Naive thymus-derived CD4-positive, alpha-beta T cell (primary cell): ENCODE measurements at regions of chr4 and their contacts with region 1.

Region 1: DNA sequence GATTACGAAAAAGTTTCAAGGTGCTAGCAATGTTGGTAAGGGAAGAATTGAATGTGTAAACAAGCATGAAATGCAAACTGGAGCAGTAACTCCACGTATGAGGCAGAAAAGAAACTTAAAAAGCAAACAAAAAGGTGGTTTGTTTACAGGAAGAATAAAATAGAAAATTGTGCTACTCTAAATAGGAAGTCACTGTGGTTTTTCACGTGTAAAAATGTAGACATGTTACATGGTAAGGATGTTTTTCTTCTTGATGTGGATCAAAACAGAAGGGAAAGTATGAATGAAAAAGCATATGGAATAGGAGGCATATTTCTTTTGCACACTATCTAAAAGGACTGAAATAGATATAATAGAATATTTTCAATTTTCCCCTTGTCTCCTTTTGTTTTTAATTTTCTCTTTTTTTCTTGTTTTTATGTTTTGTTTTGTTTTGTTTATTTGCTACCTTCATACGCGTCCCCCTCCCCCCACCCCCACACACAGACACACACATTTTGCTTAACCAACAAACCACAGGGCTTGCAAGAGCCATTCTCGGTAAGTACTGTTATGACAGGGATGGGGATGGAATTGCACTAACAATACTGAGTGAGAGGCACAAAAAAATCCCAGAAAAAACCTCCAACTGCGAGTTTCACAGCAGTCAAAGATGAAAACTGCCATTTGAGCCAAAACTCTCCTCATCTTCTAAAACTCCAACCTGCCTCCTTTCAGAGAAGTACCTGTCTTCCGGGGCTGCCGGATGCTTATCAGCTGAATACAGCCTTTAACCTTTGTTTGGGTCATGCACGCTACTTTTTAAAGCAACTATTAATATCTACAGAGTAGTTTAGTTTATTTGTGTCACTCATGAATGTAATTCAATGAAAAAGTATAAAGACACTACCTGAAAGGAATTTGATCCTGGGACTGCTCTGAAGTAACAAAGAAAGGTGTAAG is 135.8 kb downstream of the IL15 start:
- DNase-seq: no peak
- ATAC-seq: no peak
- H3K4me3 ChIP-seq: no peak overlapping the region
- H3K4me3 Mint-ChIP-seq: peak overlapping the region in 4 of 10 donors; percentile 22 to 37 (median 30)
- H3K27ac ChIP-seq: no peak overlapping the region
- H3K27ac Mint-ChIP-seq: peak overlapping the region in 1 of 9 donors; percentile 29
- H3K4me1 ChIP-seq: no peaks in the 10 kb centered on the region
- H3K4me1 Mint-ChIP-seq: peaks cover 0 to 19% (median 11%) of the 10 kb centered on the region in 7 donors
- H3K27me3 ChIP-seq: no peaks in the 10 kb centered on the region
- H3K27me3 Mint-ChIP-seq: peaks cover 11 to 34% (median 18%) of the 10 kb centered on the region in 5 donors

Region 2: DNA sequence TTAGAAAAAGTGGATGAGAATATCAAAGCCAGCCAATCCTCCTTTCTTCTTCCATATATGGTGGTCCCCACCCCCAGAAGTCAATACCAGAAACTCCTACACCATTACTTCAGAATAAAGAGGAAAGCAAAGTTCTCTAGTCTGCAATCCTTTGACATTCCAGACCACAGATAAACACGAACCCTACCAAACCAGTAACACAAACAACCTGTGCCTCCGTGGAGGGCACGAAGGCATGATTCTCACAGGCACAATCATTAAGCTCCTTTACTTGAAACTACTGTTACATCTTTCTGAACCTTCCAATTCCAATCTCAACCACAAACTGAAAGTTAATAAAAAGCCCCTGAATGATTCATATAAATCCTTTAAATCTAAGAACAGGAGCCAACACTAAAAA is 1634.5 kb before region 1 on chr4:
- CTCF ChIA-PET with region 1: no interaction called
- POLR2A ChIA-PET with region 1: no interaction called
- intact Hi-C with region 1: no loop called
- DNase-seq: no peak
- ATAC-seq: no peak
- H3K4me3 ChIP-seq: no peak overlapping the region
- H3K4me3 Mint-ChIP-seq: peak overlapping the region in 1 of 10 donors; percentile 32
- H3K27ac ChIP-seq: no peak overlapping the region
- H3K27ac Mint-ChIP-seq: peak overlapping the region in 2 of 9 donors; percentile 28 to 32
- H3K4me1 ChIP-seq: no peaks in the 10 kb centered on the region
- H3K4me1 Mint-ChIP-seq: peaks cover 9 to 22% (median 13%) of the 10 kb centered on the region in 7 donors
- H3K27me3 ChIP-seq: no peaks in the 10 kb centered on the region
- H3K27me3 Mint-ChIP-seq: peaks cover 0 to 59% (median 0%) of the 10 kb centered on the region in 5 donors

Region 3: DNA sequence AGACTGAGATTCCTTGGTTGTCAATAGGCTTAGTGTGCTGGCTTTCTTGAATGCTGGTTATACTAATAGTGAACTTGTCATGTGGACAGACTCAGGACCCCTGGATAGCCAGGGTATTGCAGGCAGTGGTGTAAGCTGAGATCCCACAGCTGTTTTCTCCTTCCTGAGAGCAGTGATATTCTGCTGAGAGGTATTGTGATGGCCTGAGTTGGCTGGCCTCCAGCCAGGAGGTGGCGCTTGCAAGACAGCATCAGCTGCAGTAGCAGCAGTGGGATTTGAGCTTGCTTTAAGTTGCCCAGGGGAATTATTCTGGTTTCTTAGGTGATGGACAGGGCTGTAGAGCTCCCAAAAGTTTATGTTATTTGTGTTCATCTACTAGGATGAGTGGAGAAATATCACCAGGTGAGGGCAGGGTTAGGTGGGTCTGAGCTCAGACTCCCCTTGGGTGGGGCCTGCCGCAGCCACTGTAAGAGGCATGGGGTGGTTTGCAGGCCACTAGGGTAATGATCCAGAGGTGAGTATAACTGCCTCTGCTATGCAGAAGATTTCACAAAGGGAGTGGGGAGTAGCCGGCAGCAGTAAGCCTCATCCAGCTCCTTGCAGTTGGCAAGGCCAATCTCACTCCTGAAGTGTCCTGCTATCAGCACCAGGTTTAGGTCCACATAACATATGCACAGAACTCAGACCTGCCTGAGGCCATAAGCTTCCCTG is 69.5 kb before region 1 on chr4:
- CTCF ChIA-PET with region 1: no interaction called
- POLR2A ChIA-PET with region 1: no interaction called
- intact Hi-C with region 1: loop called in 1 of 2 experiments (anchors 5 kb)
- DNase-seq: no peak
- ATAC-seq: no peak
- H3K4me3 ChIP-seq: no peak overlapping the region
- H3K4me3 Mint-ChIP-seq: no peak overlapping the region
- H3K27ac ChIP-seq: no peak overlapping the region
- H3K27ac Mint-ChIP-seq: no peak overlapping the region
- H3K4me1 ChIP-seq: peaks cover 0 to 8% of the 10 kb centered on the region in 2 donors
- H3K4me1 Mint-ChIP-seq: peaks cover 0 to 4% (median 0%) of the 10 kb centered on the region in 7 donors
- H3K27me3 ChIP-seq: peaks cover 0 to 4% of the 10 kb centered on the region in 2 donors
- H3K27me3 Mint-ChIP-seq: peaks cover 0 to 9% (median 4%) of the 10 kb centered on the region in 5 donors